PC-9 (cell line): ENCODE measurements at regions of chr3 and their contacts with region 1.

Region 1: DNA sequence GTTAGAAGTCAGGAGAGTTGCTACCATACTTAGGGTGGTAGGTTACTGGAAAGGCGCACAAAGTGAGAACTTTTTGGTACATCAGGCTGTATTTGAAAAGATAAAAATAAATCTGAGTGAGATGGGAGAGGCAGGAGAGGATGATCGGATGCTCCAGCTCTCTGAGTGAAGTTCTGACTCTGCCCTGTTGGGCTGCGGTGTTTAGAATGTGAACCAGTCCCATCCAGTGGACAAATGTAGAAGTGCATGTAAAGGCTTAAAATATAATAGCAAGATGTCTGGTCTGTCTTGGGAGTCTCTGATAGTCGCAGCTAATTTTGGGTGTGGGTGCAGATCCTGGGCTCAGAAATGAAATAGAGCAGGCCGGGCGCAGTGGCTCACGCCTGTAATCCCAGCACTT is 30.4 kb downstream of the ACKR2 start:
- DNase-seq: peak; percentile 34 to 44
- H3K4me3 ChIP-seq: no peak overlapping the region
- H3K27ac ChIP-seq: no peak overlapping the region
- H3K4me1 ChIP-seq: no peaks in the 10 kb centered on the region
- H3K27me3 ChIP-seq: no peaks in the 10 kb centered on the region
- CTCF ChIP-seq: peak; percentile 76

Region 2: DNA sequence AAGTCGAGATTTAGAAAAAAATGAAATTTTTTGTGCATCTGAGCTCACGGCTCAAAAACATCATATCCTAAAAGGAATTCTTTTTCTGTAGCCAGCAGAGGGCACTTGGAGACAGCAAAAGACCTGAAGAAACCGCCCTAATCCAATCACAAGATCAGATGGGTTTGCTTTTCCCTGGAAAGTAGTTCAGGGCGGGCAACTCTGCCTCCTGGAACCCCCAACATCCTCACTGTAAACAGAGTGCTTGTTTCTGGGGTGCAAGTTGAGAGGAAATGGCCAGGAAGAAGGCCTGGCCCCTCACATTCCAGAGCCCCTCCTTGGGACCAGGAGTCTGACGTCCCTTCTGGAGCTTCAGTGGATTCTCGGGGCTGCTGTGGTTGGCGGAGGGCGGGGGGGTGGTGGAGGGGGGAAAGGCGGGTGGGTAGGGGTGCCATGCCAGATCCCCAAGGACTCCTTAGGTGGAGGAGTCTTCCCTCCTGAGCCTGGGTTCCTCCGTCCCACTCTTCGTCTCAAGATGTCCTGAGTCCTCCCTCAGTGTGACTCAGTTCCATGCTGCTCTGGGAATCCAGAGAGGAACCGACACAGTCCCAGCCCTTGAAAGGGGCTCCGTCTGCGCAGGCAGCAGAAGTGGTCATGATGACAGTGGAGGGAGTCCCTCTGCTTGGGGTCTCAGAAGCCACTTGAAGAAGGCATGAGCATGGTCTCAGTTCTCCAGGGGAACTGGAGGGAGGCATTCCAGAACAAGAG is 609.5 kb before region 1 on chr3:
- CTCF ChIA-PET with region 1: no interaction called
- POLR2A ChIA-PET with region 1: no interaction called
- intact Hi-C with region 1: loop called (anchors 5 kb)
- DNase-seq: peak; percentile 30 to 42
- H3K4me3 ChIP-seq: no peak overlapping the region
- H3K27ac ChIP-seq: no peak overlapping the region
- H3K4me1 ChIP-seq: no peaks in the 10 kb centered on the region
- H3K27me3 ChIP-seq: no peaks in the 10 kb centered on the region
- CTCF ChIP-seq: peak; percentile 71

Region 3: GRCh38 chr3:42721690-42722089 is 117.9 kb before region 1 on chr3:
- CTCF ChIA-PET with region 1: no interaction called
- POLR2A ChIA-PET with region 1: no interaction called
- intact Hi-C with region 1: no loop called
- DNase-seq: no peak
- H3K4me3 ChIP-seq: no peak overlapping the region
- H3K27ac ChIP-seq: no peak overlapping the region
- H3K4me1 ChIP-seq: no peaks in the 10 kb centered on the region
- H3K27me3 ChIP-seq: no peaks in the 10 kb centered on the region
- CTCF ChIP-seq: no peak

Region 4: GRCh38 chr3:42780892-42781700 is 58.5 kb before region 1 on chr3:
- CTCF ChIA-PET with region 1: no interaction called
- POLR2A ChIA-PET with region 1: no interaction called
- intact Hi-C with region 1: loop called (anchors 1 kb)
- DNase-seq: peak in 1 of 2 experiments; percentile 55
- H3K4me3 ChIP-seq: no peak overlapping the region
- H3K27ac ChIP-seq: no peak overlapping the region
- H3K4me1 ChIP-seq: no peaks in the 10 kb centered on the region
- H3K27me3 ChIP-seq: no peaks in the 10 kb centered on the region
- CTCF ChIP-seq: peak; percentile 86

Region 5: GRCh38 chr3:42814914-42815507 is 24.6 kb before region 1 on chr3:
- CTCF ChIA-PET with region 1: interaction called, 16 read pairs
- POLR2A ChIA-PET with region 1: no interaction called
- intact Hi-C with region 1: no loop called
- DNase-seq: peak in 1 of 2 experiments; percentile 53
- H3K4me3 ChIP-seq: no peak overlapping the region
- H3K27ac ChIP-seq: peak overlapping the region; percentile 48
- H3K4me1 ChIP-seq: peaks cover 54% of the 10 kb centered on the region
- H3K27me3 ChIP-seq: no peaks in the 10 kb centered on the region
- CTCF ChIP-seq: no peak